ENCODE measurements at regions of chr5 and their contacts with region 1.

Region 1: DNA sequence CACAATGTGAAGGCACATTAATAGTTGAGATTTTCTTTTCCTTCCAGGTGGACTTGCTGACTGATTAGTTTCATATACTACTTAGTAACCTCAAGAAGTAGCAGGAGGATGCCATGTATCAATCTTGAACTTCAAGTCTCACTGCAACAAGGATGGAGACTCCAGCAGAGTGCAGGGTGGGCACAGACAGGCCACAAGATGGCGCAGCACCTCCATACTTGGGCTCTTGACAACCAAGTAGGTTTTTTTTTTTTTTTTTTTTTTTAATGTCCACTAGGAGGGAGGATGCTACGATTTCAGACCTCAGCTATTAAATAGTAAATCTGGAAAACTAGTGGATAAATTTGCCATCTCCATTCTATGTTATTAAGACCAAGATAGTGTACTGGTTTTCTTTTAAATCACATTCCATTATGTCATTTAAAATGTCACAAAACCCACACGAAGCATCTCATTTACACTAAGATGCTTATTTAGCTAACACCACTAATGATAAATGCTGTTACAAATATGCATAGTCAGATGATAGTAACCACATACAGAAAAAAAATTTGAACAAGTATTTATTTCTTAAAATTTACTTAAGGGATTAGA is 58.6 kb downstream of the IL6ST start:
- DNase-seq: peak; percentile 68 to 72 (median 69)
- H3K4me3 ChIP-seq: no peak overlapping the region
- H3K4me3 Mint-ChIP-seq: no peak overlapping the region
- H3K27ac ChIP-seq: no peak overlapping the region
- H3K27ac Mint-ChIP-seq: no peak overlapping the region
- H3K4me1 ChIP-seq: no peaks in the 10 kb centered on the region
- H3K4me1 Mint-ChIP-seq: no peaks in the 10 kb centered on the region
- H3K27me3 ChIP-seq: no peaks in the 10 kb centered on the region
- H3K27me3 Mint-ChIP-seq: no peaks in the 10 kb centered on the region
- CTCF ChIP-seq: peak; percentile 83

Region 2: GRCh38 chr5:55004729-55005128 is 931.5 kb before region 1 on chr5:
- intact Hi-C with region 1: no loop called
- DNase-seq: no peak
- H3K4me3 ChIP-seq: no peak overlapping the region
- H3K4me3 Mint-ChIP-seq: no peak overlapping the region
- H3K27ac ChIP-seq: no peak overlapping the region
- H3K27ac Mint-ChIP-seq: no peak overlapping the region
- H3K4me1 ChIP-seq: no peaks in the 10 kb centered on the region
- H3K4me1 Mint-ChIP-seq: no peaks in the 10 kb centered on the region
- H3K27me3 ChIP-seq: no peaks in the 10 kb centered on the region
- H3K27me3 Mint-ChIP-seq: peaks cover 0 to 4% (median 2%) of the 10 kb centered on the region in 3 donors
- CTCF ChIP-seq: no peak

Region 3: DNA sequence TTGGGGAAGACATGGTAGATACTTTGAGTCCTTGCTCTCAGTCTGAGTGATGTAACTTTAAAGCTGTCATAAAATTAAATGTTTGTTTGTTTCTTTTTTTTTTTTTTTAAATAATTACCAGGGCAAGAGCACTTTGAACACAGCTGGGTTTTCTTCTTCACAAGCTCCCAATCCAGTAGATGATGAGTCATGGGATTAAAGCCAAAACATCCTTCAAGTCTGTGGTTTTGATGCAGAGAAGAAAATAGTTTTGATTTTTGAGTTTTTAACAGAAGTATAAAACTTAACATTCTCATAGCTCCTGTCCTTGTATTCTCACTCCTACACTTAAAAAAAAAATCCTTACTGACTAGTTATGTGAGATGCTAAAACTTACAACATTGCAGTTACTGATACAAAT is 119.9 kb before region 1 on chr5:
- intact Hi-C with region 1: no loop called
- DNase-seq: no peak
- H3K4me3 ChIP-seq: no peak overlapping the region
- H3K4me3 Mint-ChIP-seq: no peak overlapping the region
- H3K27ac ChIP-seq: no peak overlapping the region
- H3K27ac Mint-ChIP-seq: no peak overlapping the region
- H3K4me1 ChIP-seq: peaks cover 0 to under 1% of the 10 kb centered on the region in 2 donors
- H3K4me1 Mint-ChIP-seq: peaks cover 2% of the 10 kb centered on the region
- H3K27me3 ChIP-seq: peaks cover 14 to 18% of the 10 kb centered on the region in 2 donors
- H3K27me3 Mint-ChIP-seq: peaks cover 7 to 19% (median 12%) of the 10 kb centered on the region in 3 donors
- CTCF ChIP-seq: no peak

Region 4: GRCh38 chr5:56200856-56201666 is 264.9 kb after region 1 on chr5:
- intact Hi-C with region 1: loop called in 1 of 2 experiments (anchors 10 kb)
- DNase-seq: peak; percentile 63 to 76 (median 75)
- H3K4me3 ChIP-seq: no peak overlapping the region
- H3K4me3 Mint-ChIP-seq: no peak overlapping the region
- H3K27ac ChIP-seq: no peak overlapping the region
- H3K27ac Mint-ChIP-seq: peak overlapping the region in 3 of 7 donors; percentile 40 to 82 (median 66)
- H3K4me1 ChIP-seq: peaks cover 24% of the 10 kb centered on the region in 2 donors
- H3K4me1 Mint-ChIP-seq: peaks cover 28% of the 10 kb centered on the region
- H3K27me3 ChIP-seq: no peaks in the 10 kb centered on the region
- H3K27me3 Mint-ChIP-seq: peaks cover 0 to 2% (median 2%) of the 10 kb centered on the region in 3 donors
- CTCF ChIP-seq: peak; percentile 89

Region 5: GRCh38 chr5:56270568-56271392 is 334.6 kb after region 1 on chr5:
- intact Hi-C with region 1: loop called in 1 of 2 experiments (anchors 10 kb)
- DNase-seq: peak; percentile 79 to 83 (median 82)
- H3K4me3 ChIP-seq: no peak overlapping the region
- H3K4me3 Mint-ChIP-seq: peak overlapping the region; percentile 32 to 75
- H3K27ac ChIP-seq: no peak overlapping the region
- H3K27ac Mint-ChIP-seq: peak overlapping the region; percentile 23 to 81 (median 62)
- H3K4me1 ChIP-seq: peaks cover 14 to 16% of the 10 kb centered on the region in 2 donors
- H3K4me1 Mint-ChIP-seq: peaks cover 24% of the 10 kb centered on the region
- H3K27me3 ChIP-seq: no peaks in the 10 kb centered on the region
- H3K27me3 Mint-ChIP-seq: peaks cover 0 to 3% (median 0%) of the 10 kb centered on the region in 3 donors
- CTCF ChIP-seq: peak; percentile 98

Region 6: DNA sequence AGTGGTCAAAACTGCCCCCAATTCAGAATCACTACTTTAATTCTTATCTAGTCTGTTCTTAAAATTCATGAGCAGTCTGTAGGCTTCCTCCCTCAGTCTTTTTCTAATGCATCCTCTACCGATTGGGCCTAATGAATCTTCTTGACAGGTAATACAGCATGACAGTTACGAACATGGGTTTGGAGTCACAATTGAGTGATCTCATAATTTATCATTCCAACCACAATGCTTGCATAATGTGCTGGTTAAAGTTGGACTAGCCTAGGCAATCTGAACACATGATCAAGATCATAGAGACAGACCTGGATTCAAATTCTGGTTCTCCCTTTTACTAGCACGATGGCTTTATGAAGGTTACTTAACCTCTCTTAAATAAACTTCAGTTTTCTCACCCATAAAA is 940.1 kb after region 1 on chr5:
- intact Hi-C with region 1: loop called in 1 of 2 experiments (anchors 10 kb)
- DNase-seq: peak in 1 of 3 donors; percentile 34
- H3K4me3 ChIP-seq: no peak overlapping the region
- H3K4me3 Mint-ChIP-seq: no peak overlapping the region
- H3K27ac ChIP-seq: peak overlapping the region in 1 of 2 donors; percentile 55
- H3K27ac Mint-ChIP-seq: peak overlapping the region in 6 of 7 donors; percentile 0 to 76 (median 22)
- H3K4me1 ChIP-seq: peaks cover 4 to 6% of the 10 kb centered on the region in 2 donors
- H3K4me1 Mint-ChIP-seq: peaks cover 26% of the 10 kb centered on the region
- H3K27me3 ChIP-seq: no peaks in the 10 kb centered on the region
- H3K27me3 Mint-ChIP-seq: no peaks in the 10 kb centered on the region
- CTCF ChIP-seq: no peak

Region 7: GRCh38 chr5:57221049-57221568 is 1284.9 kb after region 1 on chr5:
- intact Hi-C with region 1: loop called in 1 of 2 experiments (anchors 10 kb)
- DNase-seq: peak; percentile 46 to 65 (median 52)
- H3K4me3 ChIP-seq: no peak overlapping the region
- H3K4me3 Mint-ChIP-seq: no peak overlapping the region
- H3K27ac ChIP-seq: no peak overlapping the region
- H3K27ac Mint-ChIP-seq: no peak overlapping the region
- H3K4me1 ChIP-seq: no peaks in the 10 kb centered on the region
- H3K4me1 Mint-ChIP-seq: peaks cover 1% of the 10 kb centered on the region
- H3K27me3 ChIP-seq: no peaks in the 10 kb centered on the region
- H3K27me3 Mint-ChIP-seq: no peaks in the 10 kb centered on the region
- CTCF ChIP-seq: peak; percentile 95